Panc1 (cell line): ENCODE measurements at regions of chr3 and their contacts with region 1.

Region 1: GRCh38 chr3:66055289-66055688 is 16.6 kb upstream of the MAGI1 start:
- DNase-seq: no peak
- ATAC-seq: no peak
- H3K4me3 ChIP-seq: no peak overlapping the region
- H3K27ac ChIP-seq: no peak overlapping the region
- H3K4me1 ChIP-seq: no peaks in the 10 kb centered on the region
- H3K27me3 ChIP-seq: no peaks in the 10 kb centered on the region
- CTCF ChIP-seq: no peak

Region 2: GRCh38 chr3:66076861-66077470 is 21.7 kb after region 1 on chr3:
- CTCF ChIA-PET with region 1: interaction called, 14 read pairs
- POLR2A ChIA-PET with region 1: no interaction called
- in situ Hi-C with region 1: no loop called
- intact Hi-C with region 1: no loop called
- DNase-seq: no peak
- ATAC-seq: no peak
- H3K4me3 ChIP-seq: no peak overlapping the region
- H3K27ac ChIP-seq: no peak overlapping the region
- H3K4me1 ChIP-seq: no peaks in the 10 kb centered on the region
- H3K27me3 ChIP-seq: no peaks in the 10 kb centered on the region
- CTCF ChIP-seq: no peak